Sciatic nerve (tissue), 2 donors: ENCODE measurements at regions of chr11 and their contacts with region 1.

Region 1: GRCh38 chr11:67265633-67266423 is 445 bp upstream of the GRK2 start:
- DNase-seq: peak; percentile 90
- ATAC-seq: peak; percentile 64

Region 2: GRCh38 chr11:67211656-67212436 is 54.0 kb before region 1 on chr11:
- intact Hi-C with region 1: no loop called
- DNase-seq: no peak
- ATAC-seq: no peak

Region 3: DNA sequence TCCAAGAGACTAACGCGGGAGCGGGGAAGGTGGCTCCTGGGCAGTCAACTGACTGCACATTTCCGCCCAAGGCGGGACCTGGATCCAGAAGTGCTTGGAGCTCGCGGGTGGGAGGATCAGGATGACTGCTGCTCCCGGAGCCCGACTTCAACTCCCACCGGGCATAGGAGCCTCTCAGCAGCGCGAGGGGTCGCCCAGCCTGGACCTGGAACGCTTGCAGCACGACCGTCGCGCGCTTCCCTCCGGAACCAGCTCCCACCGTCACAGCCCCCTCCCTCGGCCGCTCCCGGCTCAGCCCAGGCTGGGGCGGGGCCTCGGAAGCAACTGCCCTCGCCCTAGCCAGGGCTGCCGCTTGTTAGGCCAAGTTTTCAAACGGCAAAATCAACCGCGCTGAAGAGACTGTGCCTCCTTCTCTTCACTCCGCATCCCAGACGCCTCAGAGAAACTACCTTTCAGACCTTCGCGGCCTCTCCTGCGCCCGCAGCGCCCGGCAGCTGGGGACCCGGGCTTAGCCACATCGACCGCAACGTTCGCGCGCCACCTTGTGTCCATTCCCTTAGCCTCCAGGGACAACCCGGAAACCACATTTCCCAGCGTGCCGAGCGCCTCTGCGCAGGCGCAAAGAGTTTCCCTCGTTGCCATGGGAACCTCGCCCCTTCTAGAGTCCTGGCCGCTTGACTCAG is 51.5 kb after region 1 on chr11:
- intact Hi-C with region 1: loop called (anchors 2 kb)
- DNase-seq: peak; percentile 99
- ATAC-seq: peak; percentile 97

Region 4: DNA sequence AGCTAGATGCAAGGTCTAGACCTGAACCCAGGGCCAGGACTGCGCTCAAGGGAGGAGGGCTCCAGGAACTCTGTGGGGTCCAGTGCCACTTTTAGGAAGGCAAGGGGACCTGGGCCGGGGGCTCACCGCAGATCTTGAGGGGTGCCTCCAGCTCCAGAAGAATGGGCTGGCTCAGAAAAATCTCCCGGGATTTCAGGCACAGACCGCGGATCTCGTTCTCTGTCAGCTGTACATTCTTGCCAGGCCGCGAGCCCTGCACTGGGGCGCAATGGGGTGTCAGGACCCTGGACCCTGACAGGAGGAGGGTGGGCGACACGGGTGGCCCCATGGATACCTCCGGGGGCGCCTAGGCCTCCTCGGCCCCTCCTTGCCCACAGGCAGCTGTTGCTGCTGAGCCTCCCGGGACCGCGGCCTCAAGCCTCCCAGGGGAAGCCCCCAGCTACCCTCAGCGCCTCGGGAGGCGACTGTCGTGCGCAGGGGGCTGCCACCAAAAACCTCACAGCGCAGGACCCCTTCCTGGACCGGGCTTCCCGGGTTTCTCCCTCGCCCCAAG is 135.2 kb after region 1 on chr11:
- intact Hi-C with region 1: loop called (anchors 1 kb)
- DNase-seq: no peak
- ATAC-seq: peak; percentile 7